GM10248 (cell line): ENCODE measurements at regions of chr20 and their contacts with region 1.

Region 1: GRCh38 chr20:48620519-48621254 is 207.1 kb downstream of the PREX1 start:
- DNase-seq: peak; percentile 87
- CTCF ChIP-seq: peak; percentile 90

Region 2: GRCh38 chr20:47691625-47692024 is 929.1 kb before region 1 on chr20:
- CTCF ChIA-PET with region 1: interaction called, 16 read pairs
- POLR2A ChIA-PET with region 1: no interaction called
- DNase-seq: no peak
- CTCF ChIP-seq: no peak

Region 3: GRCh38 chr20:47785854-47786764 is 834.6 kb before region 1 on chr20:
- CTCF ChIA-PET with region 1: interaction called, 58 read pairs
- POLR2A ChIA-PET with region 1: no interaction called
- DNase-seq: peak; percentile 71
- CTCF ChIP-seq: peak; percentile 65

Region 4: GRCh38 chr20:48002227-48002970 is 618.3 kb before region 1 on chr20:
- CTCF ChIA-PET with region 1: interaction called, 10 read pairs
- POLR2A ChIA-PET with region 1: no interaction called
- DNase-seq: peak; percentile 63
- CTCF ChIP-seq: no peak

Region 5: GRCh38 chr20:48403362-48403761 is 217.3 kb before region 1 on chr20:
- CTCF ChIA-PET with region 1: interaction called, 10 read pairs
- POLR2A ChIA-PET with region 1: no interaction called
- DNase-seq: no peak
- CTCF ChIP-seq: no peak

Region 6: DNA sequence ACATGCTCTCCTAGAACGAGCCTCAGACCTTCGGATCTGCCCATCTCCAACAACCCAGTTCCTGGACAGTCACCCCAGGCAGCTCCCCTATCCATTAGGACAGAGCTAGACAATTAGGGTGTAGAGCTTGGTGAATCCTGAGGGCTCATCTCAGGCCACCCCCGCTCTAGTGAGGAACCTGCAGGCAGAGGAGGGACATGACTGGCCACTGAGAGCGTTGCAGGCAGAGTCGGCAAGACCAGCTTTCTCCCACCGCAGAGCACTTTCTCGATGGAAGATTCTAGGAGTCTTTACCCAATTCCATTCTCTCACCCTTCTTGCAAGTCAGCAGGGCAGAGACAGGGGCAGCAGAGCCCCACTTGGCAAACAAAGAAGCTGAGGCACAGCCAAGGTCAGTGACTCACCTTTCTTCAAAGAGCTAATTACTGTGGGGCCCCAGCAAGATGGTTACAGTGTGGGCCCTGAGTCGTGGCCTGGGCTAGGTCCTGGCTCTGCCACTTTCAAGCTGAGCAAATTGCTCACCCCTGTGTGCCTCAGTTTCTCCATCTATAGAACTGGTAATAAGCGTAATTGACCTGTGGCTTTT is 70.0 kb before region 1 on chr20:
- CTCF ChIA-PET with region 1: interaction called, 11 read pairs
- POLR2A ChIA-PET with region 1: no interaction called
- DNase-seq: no peak
- CTCF ChIP-seq: no peak

Region 7: GRCh38 chr20:48635433-48636310 is 15.0 kb after region 1 on chr20:
- CTCF ChIA-PET with region 1: interaction called, 20 read pairs
- POLR2A ChIA-PET with region 1: no interaction called
- DNase-seq: peak; percentile 85
- CTCF ChIP-seq: peak; percentile 87

Region 8: DNA sequence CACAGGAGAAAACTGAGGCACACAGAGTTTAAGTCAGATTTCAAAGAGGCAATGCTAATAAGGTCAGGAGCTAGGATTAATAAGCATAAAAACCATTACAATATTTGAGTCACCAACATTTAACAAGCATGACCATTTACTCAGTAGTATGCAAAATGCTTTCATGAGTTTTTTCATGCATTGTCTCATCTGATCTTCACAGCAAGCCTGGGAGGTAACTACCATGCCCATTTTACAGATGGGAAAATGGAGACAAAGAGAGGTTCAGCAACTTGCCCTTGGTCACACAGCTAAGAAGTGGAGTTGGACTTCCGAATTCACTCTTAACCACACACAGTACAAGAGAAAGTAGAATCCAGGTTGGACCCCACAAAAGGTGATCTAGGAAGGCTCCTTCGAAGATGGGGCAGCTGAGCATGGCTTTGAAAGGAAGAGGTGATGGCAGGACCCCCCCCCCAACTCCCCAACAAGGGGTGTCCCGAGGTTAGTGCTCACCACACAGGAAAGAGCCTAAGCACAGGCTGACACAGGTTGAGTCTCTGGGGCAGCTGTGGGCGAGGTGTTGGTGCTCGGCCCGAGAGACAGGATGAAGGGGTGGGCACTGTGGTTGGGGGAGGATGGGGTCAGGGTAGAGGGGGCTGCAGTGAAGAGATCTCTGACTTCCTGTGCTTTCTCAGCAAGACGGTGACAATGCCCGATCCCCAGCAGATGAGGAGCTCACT is 98.3 kb after region 1 on chr20:
- CTCF ChIA-PET with region 1: no interaction called
- POLR2A ChIA-PET with region 1: no interaction called
- DNase-seq: no peak
- CTCF ChIP-seq: no peak